Posterior vena cava (tissue), 2 donors: ENCODE measurements at regions of chr3 and their contacts with region 1.

Region 1: DNA sequence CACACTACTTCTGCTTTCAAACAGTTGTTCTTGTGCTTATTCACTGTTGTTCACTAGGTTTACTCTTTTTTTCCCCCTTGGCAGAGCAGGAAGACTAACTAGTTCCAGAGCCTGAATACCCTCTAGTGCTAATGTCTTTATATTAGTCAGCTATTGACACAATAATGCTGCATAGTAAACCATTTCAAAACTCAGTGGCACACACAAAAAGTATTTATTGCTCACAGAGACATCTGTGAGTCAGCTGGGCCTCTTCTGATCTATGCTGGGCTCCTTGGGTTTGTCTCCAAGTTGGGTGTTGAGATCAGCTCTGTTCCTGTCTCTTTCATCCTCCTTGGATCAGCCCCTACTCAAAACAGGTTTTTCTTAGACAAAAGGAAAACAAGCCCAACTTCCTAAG is 51.1 kb downstream of the RSRC1 start:
- DNase-seq: no peak

Region 2: GRCh38 chr3:157692468-157692867 is 468.5 kb before region 1 on chr3:
- intact Hi-C with region 1: no loop called
- DNase-seq: no peak

Region 3: DNA sequence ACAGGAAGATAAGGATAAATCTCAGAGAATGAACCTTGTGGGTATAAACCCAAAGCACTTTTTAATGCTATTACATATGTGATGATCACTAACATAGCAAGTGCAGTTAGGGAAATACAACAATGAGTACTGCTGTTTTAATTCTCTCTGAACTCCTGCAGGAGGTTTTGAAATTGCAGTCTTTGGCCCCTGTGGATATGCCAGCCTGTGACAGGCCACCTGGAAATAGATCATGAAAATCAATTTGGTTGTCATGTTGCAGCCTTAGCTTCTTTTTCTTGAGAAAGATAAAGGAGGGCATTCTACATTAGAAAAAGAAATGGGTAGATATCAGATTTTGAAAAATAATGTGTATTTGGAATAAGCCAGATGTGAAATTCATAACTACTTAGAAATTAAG is 52.5 kb after region 1 on chr3:
- intact Hi-C with region 1: loop called in 1 of 2 experiments (anchors 2 kb)
- DNase-seq: no peak